ENCODE measurements at regions of chr6 and their contacts with region 1.

Region 1: DNA sequence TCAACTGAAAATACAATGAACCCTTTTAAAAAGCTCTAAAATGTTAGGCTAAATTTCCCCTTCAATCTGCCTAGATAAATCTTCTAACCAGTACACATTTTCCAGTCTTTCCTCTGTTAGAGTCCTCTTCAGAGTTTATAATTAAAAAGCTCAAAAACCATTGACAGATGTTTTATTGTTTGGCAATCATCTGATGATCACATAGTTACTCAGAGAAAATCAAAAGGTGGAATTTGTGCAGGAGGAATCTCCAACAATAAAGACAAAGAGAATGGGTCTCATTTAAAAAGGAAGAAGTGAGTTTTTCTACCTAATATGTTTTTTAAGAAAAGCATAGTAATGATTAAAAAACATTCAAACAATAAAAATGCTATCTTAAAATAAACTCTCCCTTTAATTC is 3.1 kb downstream of the TRAPPC3L start:
- DNase-seq: no peak
- CTCF ChIP-seq: no peak

Region 2: DNA sequence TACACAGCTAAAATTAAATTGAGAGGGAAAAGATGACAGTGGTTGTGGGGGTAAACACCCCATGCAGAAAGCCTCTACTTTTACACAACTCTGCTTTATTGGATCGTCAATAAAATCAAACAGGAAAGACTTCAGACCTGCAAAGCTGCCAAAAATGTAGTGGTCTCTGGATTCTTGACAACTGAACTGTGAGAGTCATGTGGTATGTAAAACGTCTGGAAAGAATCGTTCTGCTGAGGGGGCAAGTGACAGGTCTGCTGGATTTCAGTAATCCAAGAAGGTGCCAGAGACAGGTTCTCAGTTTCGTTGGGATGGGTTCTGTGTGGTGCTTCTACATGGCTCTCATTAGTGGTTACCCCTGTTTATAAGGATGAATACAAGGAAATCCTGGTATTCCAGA is 351.9 kb before region 1 on chr6:
- in situ Hi-C with region 1: no loop called
- DNase-seq: no peak
- CTCF ChIP-seq: no peak

Region 3: GRCh38 chr6:116268589-116269293 is 273.7 kb before region 1 on chr6:
- in situ Hi-C with region 1: loop called (anchors 10 kb)
- DNase-seq: peak; percentile 57
- CTCF ChIP-seq: peak; percentile 61

Region 4: DNA sequence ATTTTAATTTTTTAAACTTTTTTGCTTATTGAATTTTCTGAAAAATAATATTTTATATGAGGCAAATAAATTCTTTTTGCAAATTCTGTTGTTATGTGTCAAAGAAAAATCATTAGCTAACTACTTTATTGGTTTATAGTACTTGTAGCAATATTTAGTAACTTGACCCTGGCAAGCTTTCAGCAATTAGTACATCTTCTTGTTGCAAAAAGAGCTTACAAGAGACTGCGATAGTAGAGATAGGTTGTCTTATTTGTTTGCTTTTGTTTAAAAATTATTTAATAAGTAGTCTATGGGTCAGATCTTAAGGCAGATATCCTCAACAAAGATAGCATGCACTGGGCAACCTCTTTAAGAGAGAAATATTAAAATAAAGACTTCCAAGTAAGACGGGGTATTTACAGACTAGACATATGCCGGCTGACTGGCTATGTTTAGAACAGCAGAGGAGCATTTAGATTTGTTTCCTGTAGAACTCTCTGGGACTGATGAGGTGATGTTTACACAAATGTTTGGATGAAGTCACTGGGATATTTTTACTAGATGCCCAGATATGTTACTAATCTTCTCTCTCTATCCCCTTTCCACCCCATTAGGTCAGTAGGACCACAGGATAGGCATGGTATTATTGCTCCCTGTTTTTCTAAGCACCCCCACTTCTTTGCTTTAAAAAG is 747.9 kb after region 1 on chr6:
- in situ Hi-C with region 1: no loop called
- DNase-seq: no peak
- CTCF ChIP-seq: no peak

Measured in GM13976 (cell line).